Psoas muscle (tissue), 8 donors: ENCODE measurements at regions of chr17 and their contacts with region 1.

Region 1: GRCh38 chr17:2029911-2030778 is at the start of gene DPH1:
- DNase-seq: peak; percentile 92 to 96
- ATAC-seq: peak; percentile 88 to 92 (median 89)
- H3K4me3 ChIP-seq: peak within 1 kb of the TSS; percentile 94
- H3K27ac ChIP-seq: peak within 1 kb of the TSS; percentile 93
- H3K4me1 ChIP-seq: peaks cover 35% of the 10 kb centered on the region
- H3K27me3 ChIP-seq: no peaks in the 10 kb centered on the region
- CTCF ChIP-seq: no peak
- total RNA-seq, gene DPH1: 36.9 to 73.4 (median 45.5) TPM

Region 2: DNA sequence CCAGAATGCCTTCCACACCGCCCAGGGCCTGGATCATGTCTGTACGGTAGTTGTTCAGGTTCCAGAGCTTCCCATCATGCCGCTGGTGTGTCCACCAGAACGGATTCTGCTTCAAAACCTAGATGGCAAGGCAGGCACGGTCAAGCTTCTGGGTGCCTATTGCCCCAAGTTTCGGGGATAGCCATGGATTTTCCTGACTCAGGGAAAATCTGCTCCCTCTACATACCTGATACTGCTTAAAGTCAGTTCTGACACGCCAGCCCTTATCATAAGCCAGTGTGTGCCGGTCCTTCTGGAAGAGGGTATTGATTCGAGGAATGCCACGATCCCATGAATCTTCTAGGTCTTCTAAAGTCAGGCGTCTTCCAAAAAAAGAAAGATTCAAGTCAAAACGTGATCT is 369.1 kb before region 1 on chr17:
- intact Hi-C with region 1: loop called in 1 of 2 experiments (anchors 10 kb)
- DNase-seq: no peak
- ATAC-seq: no peak
- H3K4me3 ChIP-seq: no peak overlapping the region
- H3K27ac ChIP-seq: no peak overlapping the region
- H3K4me1 ChIP-seq: no peaks in the 10 kb centered on the region
- H3K27me3 ChIP-seq: no peaks in the 10 kb centered on the region
- CTCF ChIP-seq: no peak

Region 3: GRCh38 chr17:1908699-1909309 is 121.3 kb before region 1 on chr17:
- intact Hi-C with region 1: loop called (anchors 1 to 2 kb)
- DNase-seq: peak; percentile 37 to 66
- ATAC-seq: peak; percentile 73 to 82 (median 76)
- H3K4me3 ChIP-seq: peak overlapping the region; percentile 59
- H3K27ac ChIP-seq: peak overlapping the region; percentile 42
- H3K4me1 ChIP-seq: peaks cover 35% of the 10 kb centered on the region
- H3K27me3 ChIP-seq: no peaks in the 10 kb centered on the region
- CTCF ChIP-seq: peak; percentile 73

Region 4: DNA sequence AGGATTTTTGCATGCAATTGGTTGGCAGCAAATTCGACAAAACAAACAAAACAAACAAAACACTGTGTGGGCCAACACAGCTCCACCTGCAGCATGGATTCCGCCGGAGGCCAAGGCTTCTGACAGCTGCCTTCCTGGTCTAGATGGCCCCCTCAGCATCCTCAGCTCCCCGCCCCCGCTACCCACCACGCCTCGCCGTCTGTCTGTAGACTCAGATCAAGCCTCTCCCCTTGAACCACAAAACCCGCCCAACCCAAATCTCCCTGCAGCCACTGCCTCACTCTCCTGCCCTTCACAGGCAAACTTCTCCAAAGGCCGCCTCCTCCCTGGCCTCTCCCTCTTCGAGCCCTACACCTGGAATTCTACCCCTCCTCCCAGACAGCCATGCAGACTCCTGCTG is 62.9 kb before region 1 on chr17:
- intact Hi-C with region 1: loop called in 1 of 2 experiments (anchors 10 kb)
- DNase-seq: no peak
- ATAC-seq: no peak
- H3K4me3 ChIP-seq: no peak overlapping the region
- H3K27ac ChIP-seq: no peak overlapping the region
- H3K4me1 ChIP-seq: peaks cover 10% of the 10 kb centered on the region
- H3K27me3 ChIP-seq: no peaks in the 10 kb centered on the region
- CTCF ChIP-seq: no peak